Activated CD8-positive, alpha-beta T cell treated with anti-CD3 and anti-CD28 coated beads for 36 hours (primary cell): ENCODE measurements at regions of chr17 and their contacts with region 1.

Region 1: DNA sequence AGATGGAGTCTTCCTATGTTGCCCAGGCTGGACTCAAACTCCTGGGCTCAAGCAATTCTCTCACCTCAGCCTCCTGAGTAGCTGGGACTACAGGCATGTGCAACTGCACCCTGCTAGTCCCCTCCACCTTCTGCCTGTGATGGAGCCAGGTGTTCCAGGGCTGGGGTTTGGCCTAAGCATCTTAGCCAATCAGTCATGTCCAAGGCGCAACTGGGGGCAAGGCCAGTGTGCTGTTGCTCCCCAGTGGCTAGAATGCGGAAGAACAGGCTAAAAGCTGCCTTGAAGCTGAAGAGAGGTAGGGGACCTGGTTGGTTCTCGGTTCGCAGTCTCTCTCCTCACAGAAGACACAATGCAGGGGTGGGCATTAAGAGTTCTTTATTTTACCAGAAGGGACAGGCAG is 18.6 kb downstream of the FLOT2 start:
- DNase-seq: peak; percentile 55
- ATAC-seq: peak; percentile 57
- H3K4me3 Mint-ChIP-seq: no peak overlapping the region
- H3K27ac Mint-ChIP-seq: peak overlapping the region; percentile 7
- H3K4me1 Mint-ChIP-seq: peaks cover 29% of the 10 kb centered on the region
- H3K27me3 Mint-ChIP-seq: no peaks in the 10 kb centered on the region
- CTCF ChIP-seq: no peak

Region 2: DNA sequence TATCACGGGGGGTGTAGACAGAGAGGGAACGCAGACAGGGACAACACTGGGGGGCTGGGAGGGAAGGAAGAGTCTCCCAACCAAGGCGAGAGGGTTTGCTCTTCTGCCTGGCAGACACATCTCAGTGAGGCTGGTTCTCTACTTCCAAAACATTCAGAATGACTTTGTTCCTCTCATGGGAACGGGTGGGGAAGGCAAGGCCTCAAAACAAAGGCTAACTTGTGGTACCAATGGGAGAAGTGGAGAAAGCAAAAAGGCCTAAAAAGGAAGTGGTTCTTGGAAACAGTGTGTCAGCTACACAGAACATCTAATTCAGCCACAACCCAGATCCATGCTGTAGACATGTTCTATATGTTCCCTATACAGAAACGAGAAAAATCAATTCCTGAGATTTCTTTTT is 11.0 kb after region 1 on chr17:
- CTCF ChIA-PET with region 1: interaction called, 3 read pairs
- POLR2A ChIA-PET with region 1: interaction called, 22 read pairs
- intact Hi-C with region 1: no loop called
- DNase-seq: no peak
- ATAC-seq: no peak
- H3K4me3 Mint-ChIP-seq: no peak overlapping the region
- H3K27ac Mint-ChIP-seq: peak overlapping the region; percentile 87
- H3K4me1 Mint-ChIP-seq: peaks cover 47% of the 10 kb centered on the region
- H3K27me3 Mint-ChIP-seq: no peaks in the 10 kb centered on the region
- CTCF ChIP-seq: no peak

Region 3: GRCh38 chr17:29124117-29124924 is 245.3 kb after region 1 on chr17:
- CTCF ChIA-PET with region 1: no interaction called
- POLR2A ChIA-PET with region 1: no interaction called
- intact Hi-C with region 1: no loop called
- DNase-seq: peak; percentile 55
- ATAC-seq: peak; percentile 97
- H3K4me3 Mint-ChIP-seq: no peak overlapping the region
- H3K27ac Mint-ChIP-seq: no peak overlapping the region
- H3K4me1 Mint-ChIP-seq: no peaks in the 10 kb centered on the region
- H3K27me3 Mint-ChIP-seq: no peaks in the 10 kb centered on the region
- CTCF ChIP-seq: peak; percentile 76